Left colon (tissue), 2 donors: ENCODE measurements at regions of chr19 and their contacts with region 1.

Region 1: DNA sequence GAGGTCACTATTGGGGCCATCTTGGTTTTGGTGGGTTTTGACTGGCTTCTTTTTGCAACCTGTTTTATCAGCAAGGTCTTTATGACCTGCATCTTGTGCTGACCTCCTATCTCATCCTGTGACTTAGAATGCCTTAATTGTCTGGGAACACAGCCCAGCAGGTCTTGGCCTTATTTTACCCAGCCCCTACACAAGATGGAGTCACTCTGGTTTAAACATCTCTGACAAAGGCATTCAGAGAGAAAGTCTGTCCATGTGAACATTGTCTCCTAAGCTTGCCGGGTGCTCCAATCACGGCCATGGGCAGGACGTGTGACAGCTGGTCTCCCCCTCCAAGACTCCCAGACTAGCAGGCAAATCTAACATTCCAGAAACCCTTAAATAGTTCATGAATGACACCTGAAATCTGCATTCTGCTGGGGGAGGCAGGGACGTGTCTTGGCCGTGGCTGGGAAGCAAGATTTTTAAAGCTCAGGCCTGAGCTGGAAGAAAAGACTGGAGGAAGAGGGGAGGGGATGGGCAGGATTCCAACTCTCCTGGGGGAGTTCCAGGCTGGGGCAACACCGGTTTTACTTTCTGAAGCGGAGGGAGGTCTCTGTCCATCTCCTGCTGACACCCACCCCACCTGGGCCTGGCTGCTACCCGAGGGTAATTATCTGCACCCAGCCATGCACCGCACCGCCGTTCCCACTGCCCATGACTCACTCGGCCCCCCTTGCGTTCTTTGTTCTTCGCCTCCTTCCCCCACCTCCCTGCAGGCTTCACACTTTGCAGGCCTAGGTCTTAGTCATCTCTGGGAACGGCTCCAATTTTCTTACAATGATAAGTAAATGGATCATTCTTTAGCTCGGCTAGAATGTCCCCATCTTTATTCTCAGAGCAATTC is 11.6 kb upstream of the OR1M1 start:
- DNase-seq: peak; percentile 27 to 73
- ATAC-seq: peak; percentile 80

Region 2: DNA sequence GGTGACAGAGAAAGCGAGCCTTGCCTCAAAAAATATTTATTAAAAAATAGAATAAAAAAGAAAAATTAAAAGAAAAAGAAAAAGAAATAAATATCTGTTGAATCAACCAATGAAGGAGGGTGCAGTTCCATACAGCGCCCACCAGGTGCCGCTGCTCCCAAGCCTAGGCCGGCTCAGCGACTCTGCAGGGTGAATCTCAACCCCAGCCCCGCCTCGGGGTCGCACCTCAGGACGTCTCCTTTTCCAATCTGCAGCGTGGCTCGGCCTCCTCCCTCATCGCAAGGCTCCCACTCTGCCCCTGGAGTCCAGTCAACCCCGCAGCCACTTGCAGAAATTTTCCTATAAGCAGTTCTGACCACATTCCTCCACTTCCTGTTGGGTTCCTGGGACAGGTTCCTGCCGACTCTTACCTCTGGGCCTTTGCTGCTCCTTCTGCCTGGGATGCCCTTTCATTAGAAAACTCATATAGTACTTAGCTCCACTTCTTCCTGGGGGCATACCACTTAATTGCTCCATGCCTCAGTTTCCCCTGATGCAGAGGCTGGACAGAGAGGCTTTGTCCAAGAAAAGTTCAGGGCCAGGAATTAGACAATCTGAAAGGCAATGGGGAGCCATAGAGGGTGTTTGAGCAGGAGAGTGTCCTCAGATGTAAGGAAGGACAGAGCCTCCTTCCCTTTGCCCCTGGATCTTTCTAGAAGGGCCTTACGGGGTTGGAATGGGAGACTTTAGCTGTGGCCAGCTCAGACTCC is 420.5 kb before region 1 on chr19:
- intact Hi-C with region 1: loop called in 1 of 2 experiments (anchors 5 kb)
- DNase-seq: peak in 1 of 2 donors; percentile 46
- ATAC-seq: peak; percentile 72

Region 3: DNA sequence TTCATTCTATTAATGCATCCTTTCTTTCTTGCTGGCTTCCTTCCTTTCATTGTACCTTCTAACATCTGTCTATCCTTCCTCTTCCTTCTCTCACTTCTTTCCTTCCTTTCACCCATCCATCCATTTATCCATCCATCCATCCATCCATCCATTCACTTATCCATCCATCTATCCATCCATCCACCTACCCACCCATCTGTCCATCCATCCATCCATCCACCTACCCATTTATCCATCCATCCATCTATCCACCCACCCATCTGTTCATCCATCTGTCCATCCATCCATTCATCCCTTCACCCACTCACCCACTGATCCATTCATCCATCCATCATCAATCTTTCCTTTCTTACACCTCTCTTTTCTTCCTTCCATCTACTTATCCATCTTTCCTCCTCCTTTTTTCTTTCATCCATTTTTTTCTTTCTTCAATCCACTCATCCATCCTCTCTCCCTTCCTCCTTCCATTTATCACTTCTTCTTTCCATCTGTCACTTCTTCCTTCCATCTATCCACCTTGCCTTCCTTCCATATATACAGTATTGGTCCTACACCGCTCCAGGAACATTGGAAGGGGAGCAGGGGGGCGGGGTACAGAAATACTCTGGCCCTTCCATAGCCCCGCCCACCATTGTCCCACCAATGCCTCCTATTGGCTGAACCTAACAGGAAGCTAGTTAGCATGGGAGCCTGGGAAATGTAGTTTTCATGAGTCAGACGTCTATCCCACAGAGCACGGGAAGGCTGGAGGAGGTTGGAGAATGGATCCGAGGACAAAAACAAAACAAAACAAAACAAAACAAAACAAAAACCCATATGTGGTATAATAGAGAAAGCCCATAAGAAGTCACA is 197.2 kb before region 1 on chr19:
- intact Hi-C with region 1: no loop called
- DNase-seq: no peak
- ATAC-seq: no peak